Right cardiac atrium (tissue), 5 donors: ENCODE measurements at regions of chr1 and their contacts with region 1.

Region 1: DNA sequence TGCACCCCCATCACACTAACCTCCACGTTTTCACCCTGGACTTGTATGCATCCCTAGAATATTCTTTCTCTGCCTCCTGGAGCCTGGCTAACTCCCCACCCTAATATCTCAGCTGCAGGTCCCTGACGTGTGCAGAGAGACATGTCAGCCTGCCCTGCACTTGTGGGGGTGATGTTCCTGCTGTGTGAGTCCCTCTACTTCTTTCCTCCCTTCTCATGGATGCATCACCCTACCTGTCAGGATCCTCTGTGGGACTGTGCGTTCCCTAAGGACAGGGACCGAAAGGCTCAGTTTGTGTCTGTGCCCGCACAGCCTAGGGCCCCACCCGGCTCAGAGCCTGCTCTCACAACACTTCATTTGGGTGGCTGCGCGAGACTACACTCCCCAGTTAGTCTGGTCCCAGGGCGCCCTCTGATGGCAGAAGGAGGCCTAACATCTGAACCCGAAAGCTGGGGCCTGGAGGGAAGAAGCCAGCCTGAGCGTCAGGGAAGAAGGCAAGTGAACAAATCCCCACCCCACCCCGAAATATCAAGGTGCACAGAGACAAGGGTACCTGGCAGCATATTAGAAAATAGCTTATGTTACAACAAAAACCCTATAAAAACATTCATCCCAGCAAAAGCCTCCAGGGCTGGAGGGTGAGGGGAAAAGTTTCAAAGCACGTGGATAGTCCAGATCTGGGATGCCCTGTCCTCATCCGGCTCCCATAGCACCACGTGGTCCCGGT is 3.7 kb downstream of the CD52 start:
- DNase-seq: peak; percentile 92 to 97 (median 95)
- ATAC-seq: peak; percentile 92 to 94
- H3K4me3 ChIP-seq: no peak overlapping the region
- H3K27ac ChIP-seq: no peak overlapping the region
- H3K4me1 ChIP-seq: peaks cover 4% of the 10 kb centered on the region
- H3K27me3 ChIP-seq: no peaks in the 10 kb centered on the region

Region 2: DNA sequence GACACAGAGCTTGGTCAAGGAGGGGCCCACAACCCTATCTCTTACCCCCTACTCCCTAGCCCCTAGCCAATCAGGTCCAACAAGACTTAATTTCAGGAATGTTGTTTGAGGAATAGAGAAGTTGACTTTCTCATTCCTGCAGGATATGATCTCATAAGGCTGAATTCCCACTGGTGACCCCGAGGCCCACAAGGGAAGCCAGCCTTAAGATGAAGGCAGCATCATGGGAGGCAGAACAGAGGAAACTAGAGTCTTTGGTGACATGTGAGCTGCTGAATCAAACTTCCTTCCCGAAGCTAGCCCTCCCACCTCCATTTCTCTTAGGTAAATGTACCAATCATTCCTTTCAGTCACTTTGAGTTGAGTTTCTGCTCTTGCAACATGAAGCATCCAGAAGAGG is 219.0 kb before region 1 on chr1:
- intact Hi-C with region 1: loop called in 2 of 4 experiments (anchors 5 to 10 kb)
- DNase-seq: no peak
- ATAC-seq: no peak
- H3K4me3 ChIP-seq: no peak overlapping the region
- H3K27ac ChIP-seq: no peak overlapping the region
- H3K4me1 ChIP-seq: no peaks in the 10 kb centered on the region
- H3K27me3 ChIP-seq: no peaks in the 10 kb centered on the region

Region 3: DNA sequence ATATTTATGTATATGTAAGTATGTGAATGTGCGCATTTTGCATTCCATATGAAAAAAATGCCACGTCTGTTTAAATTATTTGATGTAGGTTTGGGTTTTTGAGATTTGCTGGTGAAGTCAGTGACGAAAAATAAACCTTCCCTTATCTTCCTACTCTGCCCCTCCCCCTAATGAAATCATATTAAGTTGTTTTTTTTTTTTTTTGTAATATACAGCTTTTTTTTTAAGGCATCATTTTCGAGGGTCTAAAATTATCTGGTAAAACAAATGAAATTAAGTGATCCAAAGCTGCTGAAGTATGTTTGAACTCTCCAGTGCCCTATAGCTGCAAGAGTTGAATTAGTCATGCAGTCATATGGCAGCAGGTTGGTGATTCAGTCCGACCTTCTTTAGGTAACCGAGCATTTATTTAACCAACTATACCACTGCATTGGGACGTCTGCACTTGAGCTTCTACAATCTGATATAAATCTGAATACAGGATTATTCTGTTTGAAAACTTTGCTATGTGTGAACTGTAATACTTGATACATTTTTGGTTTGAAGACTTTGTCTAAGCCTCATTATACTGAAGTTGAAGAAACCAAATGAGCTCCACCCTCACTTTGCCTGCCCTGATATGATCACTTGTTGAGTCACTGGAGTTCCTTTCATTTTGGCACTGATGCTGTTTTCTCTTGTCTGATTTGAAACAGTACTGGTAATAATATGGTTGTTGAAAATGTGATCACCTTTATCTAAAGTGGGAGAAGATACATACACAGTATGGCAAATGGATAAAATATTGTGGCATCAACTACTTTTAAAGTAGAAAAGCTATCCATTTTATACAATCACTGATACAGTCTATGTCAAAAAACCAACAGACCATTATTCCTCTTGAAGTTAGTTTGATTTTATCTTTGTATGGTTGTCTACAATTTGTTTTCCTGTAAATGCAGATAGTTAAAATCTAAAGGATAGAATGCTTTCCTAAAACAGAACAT is 198.2 kb before region 1 on chr1:
- intact Hi-C with region 1: no loop called
- DNase-seq: no peak
- ATAC-seq: peak in 1 of 2 donors; percentile 66
- H3K4me3 ChIP-seq: no peak overlapping the region
- H3K27ac ChIP-seq: no peak overlapping the region
- H3K4me1 ChIP-seq: no peaks in the 10 kb centered on the region
- H3K27me3 ChIP-seq: no peaks in the 10 kb centered on the region

Region 4: GRCh38 chr1:26169669-26170471 is 151.6 kb before region 1 on chr1 and contains the start of gene ZNF593:
- intact Hi-C with region 1: loop called in 1 of 4 experiments (anchors 10 kb)
- DNase-seq: peak; percentile 95 to 97 (median 97)
- ATAC-seq: peak; percentile 97
- H3K4me3 ChIP-seq: peak within 1 kb of the TSS; percentile 68
- H3K27ac ChIP-seq: peak within 1 kb of the TSS; percentile 39
- H3K4me1 ChIP-seq: peaks cover 2% of the 10 kb centered on the region
- H3K27me3 ChIP-seq: no peaks in the 10 kb centered on the region
- total RNA-seq, gene ZNF593: 14.4 to 24.2 (median 20.5) TPM

Region 5: DNA sequence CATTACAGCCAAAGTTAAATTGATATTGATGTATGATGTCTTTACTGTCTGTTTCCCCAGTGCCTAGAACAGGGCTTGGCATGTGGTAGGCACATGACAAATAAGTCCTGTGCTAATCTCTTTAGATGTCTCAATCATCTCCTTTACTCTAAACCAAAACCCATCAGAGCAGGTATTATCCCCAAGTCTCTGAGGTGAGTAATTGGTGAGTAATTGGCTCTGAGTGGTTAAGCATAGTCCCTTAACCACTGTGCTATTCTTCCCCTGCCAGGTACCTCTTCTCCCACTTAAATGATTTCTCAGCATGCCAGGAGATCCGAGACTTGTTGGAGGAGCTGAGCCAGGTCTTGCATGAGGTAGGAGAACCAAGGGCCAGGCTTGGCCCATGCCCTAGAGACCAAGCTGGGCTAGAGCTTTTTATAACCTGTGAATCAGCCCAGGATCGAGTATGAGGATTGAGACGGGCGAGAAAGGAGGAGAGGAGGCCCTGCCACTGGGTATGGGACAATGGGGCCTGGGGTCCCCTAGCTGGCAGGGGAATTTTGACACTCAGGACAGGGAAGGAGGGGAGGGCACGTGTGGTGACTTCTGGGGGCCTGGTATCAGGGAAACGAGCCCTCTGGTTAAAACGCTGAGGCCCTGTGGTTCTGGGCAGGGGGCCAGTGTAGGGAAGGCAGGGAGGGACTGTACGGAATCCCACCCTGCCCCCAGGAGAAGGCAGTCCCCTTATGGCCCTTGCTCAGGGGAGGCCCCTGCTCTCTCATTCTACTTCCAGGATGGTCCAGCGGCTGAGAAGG is 139.7 kb before region 1 on chr1:
- intact Hi-C with region 1: loop called in 2 of 4 experiments (anchors 10 kb)
- DNase-seq: no peak
- ATAC-seq: no peak
- H3K4me3 ChIP-seq: no peak overlapping the region
- H3K27ac ChIP-seq: no peak overlapping the region
- H3K4me1 ChIP-seq: no peaks in the 10 kb centered on the region
- H3K27me3 ChIP-seq: no peaks in the 10 kb centered on the region

Region 6: GRCh38 chr1:26279456-26280332 is 41.8 kb before region 1 on chr1 and contains the start of gene SH3BGRL3:
- intact Hi-C with region 1: loop called (anchors 2 to 5 kb)
- DNase-seq: peak; percentile 92 to 97 (median 96)
- ATAC-seq: peak; percentile 83 to 86
- H3K4me3 ChIP-seq: peak within 1 kb of the TSS; percentile 57
- H3K27ac ChIP-seq: peak within 1 kb of the TSS; percentile 88
- H3K4me1 ChIP-seq: peaks cover 14% of the 10 kb centered on the region
- H3K27me3 ChIP-seq: no peaks in the 10 kb centered on the region
- total RNA-seq, gene SH3BGRL3: 28.9 to 71.3 (median 51.1) TPM

Region 7: DNA sequence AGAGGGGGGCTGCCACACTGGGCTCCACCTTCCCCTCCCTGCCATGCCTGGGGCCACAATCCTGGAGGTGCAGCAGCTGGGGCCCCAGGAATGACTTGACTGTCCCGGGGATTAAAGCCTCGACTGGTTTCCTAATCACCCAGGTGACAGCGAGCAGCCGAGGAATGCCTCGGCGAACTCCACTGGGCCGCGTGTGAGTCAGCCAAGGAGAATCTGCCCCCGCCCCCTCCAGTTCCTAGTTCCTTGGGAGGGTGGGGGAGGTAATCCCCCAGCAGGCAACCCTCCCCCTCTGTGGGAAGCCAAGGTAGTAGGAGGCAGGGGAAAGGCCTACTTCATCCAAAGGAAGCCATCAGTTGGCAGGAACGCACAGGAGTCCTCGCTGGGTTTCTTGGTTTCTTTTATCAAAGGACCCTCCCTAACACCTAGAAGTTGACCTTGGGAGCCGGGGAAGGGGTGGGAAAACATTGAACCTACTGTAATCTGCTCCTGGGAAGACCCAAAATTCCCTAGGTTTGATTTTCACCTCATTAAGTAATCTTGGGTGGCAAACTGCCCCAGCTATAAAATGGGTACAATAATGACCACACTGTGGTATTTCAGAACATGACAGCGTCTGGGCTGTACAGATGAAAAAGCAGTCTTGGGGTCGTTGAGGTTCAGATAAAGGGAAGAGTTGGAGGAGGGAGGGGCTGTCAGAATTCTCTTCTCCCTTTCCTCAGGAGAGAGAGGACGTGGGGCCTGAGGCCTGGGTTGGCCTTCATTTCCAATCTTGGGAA is 689.7 kb after region 1 on chr1:
- intact Hi-C with region 1: no loop called
- DNase-seq: peak in 1 of 3 donors; percentile 67
- ATAC-seq: no peak
- H3K4me3 ChIP-seq: peak overlapping the region; percentile 51
- H3K27ac ChIP-seq: peak overlapping the region; percentile 69
- H3K4me1 ChIP-seq: peaks cover 3% of the 10 kb centered on the region
- H3K27me3 ChIP-seq: no peaks in the 10 kb centered on the region